ENCODE measurements at regions of chr3 and their contacts with region 1.

Region 1: DNA sequence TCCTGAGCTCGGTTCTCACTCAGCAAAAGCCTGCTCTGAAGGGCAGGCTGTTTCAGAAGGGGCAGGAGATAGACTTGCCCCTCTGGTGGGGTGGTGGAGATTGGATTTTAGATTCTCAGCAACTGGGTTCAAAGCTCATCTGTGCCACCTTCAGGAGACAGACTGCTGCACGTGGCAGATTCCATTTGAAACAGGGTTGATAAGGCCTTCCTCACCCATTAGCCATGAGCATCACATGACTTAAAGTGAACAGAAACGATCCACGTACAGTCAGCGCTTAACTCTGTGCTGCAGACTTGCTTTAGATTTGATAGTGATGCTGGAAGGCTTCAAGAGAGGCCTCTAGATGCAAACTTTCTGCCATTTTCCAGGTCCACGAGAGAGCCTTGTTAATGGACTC is 35.0 kb upstream of the MGLL start:
- DNase-seq: no peak
- H3K4me3 ChIP-seq: no peak overlapping the region
- H3K27ac ChIP-seq: no peak overlapping the region
- H3K4me1 ChIP-seq: no peaks in the 10 kb centered on the region
- H3K27me3 ChIP-seq: no peaks in the 10 kb centered on the region
- CTCF ChIP-seq: peak in 1 of 2 donors; percentile 37

Region 2: GRCh38 chr3:127697551-127698240 is 159.6 kb before region 1 on chr3:
- CTCF ChIA-PET with region 1: interaction called, 4 read pairs
- dilution Hi-C with region 1: no loop called
- in situ Hi-C with region 1: no loop called
- intact Hi-C with region 1: loop called (anchors 10 kb)
- DNase-seq: peak; percentile 33
- H3K4me3 ChIP-seq: no peak overlapping the region
- H3K27ac ChIP-seq: no peak overlapping the region
- H3K4me1 ChIP-seq: peaks cover 7% of the 10 kb centered on the region
- H3K27me3 ChIP-seq: no peaks in the 10 kb centered on the region
- CTCF ChIP-seq: no peak

Region 3: DNA sequence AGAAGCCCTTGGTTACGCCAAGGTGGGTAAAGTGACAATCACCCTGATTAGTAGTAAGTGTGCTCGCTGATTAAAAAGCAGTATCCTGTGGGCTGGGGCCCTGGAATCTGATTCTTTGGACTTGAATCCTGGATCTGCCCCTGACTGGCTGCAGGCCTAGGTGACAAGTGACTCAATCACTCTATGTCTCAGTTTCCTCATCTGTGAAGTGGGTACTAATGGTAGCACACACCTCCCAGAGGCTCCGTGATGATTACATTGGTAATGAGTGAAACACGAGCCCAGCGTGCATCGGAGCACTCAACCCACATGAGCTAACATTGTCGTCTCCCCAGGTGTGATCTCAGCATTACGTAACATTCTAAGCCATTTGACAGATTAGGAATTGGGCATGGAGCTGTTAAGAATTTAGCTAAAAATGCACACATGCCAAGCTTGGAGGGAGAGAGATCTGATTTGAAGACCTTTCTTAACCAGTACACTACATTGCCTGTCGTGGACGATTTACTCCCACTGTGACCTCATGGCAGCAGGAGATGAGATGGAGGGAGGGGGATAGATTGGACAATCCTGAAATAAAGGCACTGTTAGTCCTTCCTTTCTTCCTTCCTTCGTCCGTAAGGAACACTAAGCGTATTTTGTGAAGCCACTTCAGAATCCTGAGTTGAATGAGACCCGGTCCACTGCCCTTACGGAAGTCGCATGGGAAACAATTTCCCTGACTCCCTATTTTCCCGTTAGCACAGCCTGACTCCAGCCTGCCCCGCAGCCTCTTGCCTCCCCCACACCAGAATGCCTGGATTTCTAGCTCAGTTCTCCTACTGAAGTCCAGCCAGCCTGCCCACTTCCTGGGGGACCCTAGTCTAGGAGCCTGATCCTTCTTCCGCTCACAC is 67.1 kb before region 1 on chr3:
- CTCF ChIA-PET with region 1: no interaction called
- dilution Hi-C with region 1: no loop called
- in situ Hi-C with region 1: no loop called
- intact Hi-C with region 1: no loop called
- DNase-seq: no peak
- H3K4me3 ChIP-seq: no peak overlapping the region
- H3K27ac ChIP-seq: no peak overlapping the region
- H3K4me1 ChIP-seq: peaks cover 10% of the 10 kb centered on the region
- H3K27me3 ChIP-seq: no peaks in the 10 kb centered on the region
- CTCF ChIP-seq: no peak

Region 4: DNA sequence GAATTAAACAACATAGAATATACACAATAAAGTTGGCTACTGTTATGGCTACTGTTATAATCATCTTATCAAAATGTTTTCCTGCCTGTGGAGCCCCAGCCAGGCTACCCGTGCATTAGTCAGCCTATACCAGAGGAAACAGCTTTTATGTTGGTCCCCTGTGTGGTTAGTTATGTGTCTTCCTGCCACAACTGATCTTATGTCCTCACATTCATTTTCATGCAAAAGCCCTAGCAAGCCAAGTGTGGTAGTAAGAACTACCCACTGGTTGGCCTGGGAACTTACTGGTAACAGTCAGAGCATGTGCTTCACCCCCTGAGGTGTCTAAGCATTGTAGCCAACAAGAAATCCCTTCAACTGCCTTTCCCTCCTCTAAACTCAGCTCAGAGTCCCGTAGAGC is 56.8 kb before region 1 on chr3:
- CTCF ChIA-PET with region 1: no interaction called
- dilution Hi-C with region 1: no loop called
- in situ Hi-C with region 1: no loop called
- intact Hi-C with region 1: loop called (anchors 2 kb)
- DNase-seq: peak; percentile 38
- H3K4me3 ChIP-seq: no peak overlapping the region
- H3K27ac ChIP-seq: peak overlapping the region; percentile 93
- H3K4me1 ChIP-seq: peaks cover 38% of the 10 kb centered on the region
- H3K27me3 ChIP-seq: no peaks in the 10 kb centered on the region
- CTCF ChIP-seq: no peak